PC-9 (cell line): ENCODE measurements at regions of chr20 and their contacts with region 1.

Region 1: DNA sequence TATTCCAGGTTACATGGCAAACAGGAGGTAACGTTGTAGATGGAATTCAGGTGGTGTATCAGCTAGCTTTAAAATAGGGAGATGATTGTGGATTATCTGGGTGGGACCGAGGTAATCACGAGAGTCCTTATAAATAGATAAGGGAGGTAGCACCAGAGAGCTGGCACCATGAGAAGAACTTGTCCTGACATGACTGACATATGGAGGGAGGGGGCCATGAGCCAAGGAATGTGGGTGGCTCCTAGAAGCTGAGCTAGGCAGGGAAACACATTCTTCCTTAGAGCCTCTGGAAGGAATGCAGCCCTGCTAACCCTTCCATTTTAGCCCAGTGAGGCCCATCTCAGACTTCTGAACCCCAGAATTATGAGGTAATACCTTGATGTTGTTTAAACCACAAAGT is 321.1 kb upstream of the SULF2 start:
- DNase-seq: no peak
- H3K4me3 ChIP-seq: no peak overlapping the region
- H3K27ac ChIP-seq: no peak overlapping the region
- H3K4me1 ChIP-seq: no peaks in the 10 kb centered on the region
- H3K27me3 ChIP-seq: no peaks in the 10 kb centered on the region
- CTCF ChIP-seq: no peak

Region 2: GRCh38 chr20:48025031-48025515 is 81.3 kb before region 1 on chr20:
- CTCF ChIA-PET with region 1: interaction called, 13 read pairs
- POLR2A ChIA-PET with region 1: no interaction called
- intact Hi-C with region 1: no loop called
- DNase-seq: peak; percentile 85 to 88
- H3K4me3 ChIP-seq: peak overlapping the region; percentile 72
- H3K27ac ChIP-seq: peak overlapping the region; percentile 94
- H3K4me1 ChIP-seq: peaks cover 35% of the 10 kb centered on the region
- H3K27me3 ChIP-seq: no peaks in the 10 kb centered on the region
- CTCF ChIP-seq: no peak

Region 3: GRCh38 chr20:48246497-48247350 is 140.3 kb after region 1 on chr20:
- CTCF ChIA-PET with region 1: no interaction called
- POLR2A ChIA-PET with region 1: interaction called, 12 read pairs
- intact Hi-C with region 1: no loop called
- DNase-seq: no peak
- H3K4me3 ChIP-seq: no peak overlapping the region
- H3K27ac ChIP-seq: no peak overlapping the region
- H3K4me1 ChIP-seq: no peaks in the 10 kb centered on the region
- H3K27me3 ChIP-seq: no peaks in the 10 kb centered on the region
- CTCF ChIP-seq: no peak